GM12878 (cell line): ENCODE measurements at regions of chr1 and their contacts with region 1.

Region 1: DNA sequence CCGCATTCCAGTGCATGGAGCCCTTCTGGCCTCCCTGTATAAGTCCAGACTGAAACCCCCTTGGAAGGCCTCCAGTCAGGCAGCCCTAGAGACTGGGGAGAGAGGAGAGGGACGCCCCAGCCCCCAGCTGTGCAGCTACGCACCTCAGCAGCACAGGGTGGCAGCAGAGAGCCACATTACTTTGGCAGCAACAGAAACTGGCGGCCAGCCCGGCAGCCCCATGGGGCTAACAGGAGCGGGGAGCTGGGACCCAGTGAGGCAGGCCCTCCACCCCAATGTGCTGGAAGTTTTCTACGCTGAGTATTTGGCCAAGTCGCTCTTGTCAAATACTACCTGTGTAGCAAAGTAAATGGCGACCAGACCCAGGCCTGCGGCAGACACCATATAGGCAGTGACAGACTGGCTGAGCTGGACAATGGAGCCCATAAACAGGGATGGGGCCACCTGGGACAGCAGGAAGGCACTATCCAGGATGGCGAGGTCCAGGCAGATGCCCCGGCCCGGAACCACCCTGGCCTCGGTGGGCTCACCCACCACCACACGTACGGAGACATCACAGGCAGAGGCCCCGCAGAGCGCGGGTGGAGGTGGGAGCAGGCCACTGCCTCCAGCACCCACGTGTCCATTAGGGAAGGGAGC is 21.2 kb downstream of the SLC45A3 start:
- DNase-seq: no peak
- ATAC-seq: peak; percentile 95
- H3K4me3 ChIP-seq: no peak overlapping the region
- H3K27ac ChIP-seq: no peak overlapping the region
- H3K4me1 ChIP-seq: no peaks in the 10 kb centered on the region; the same call in 1 of the 2 replicates
- H3K27me3 ChIP-seq: no peaks in the 10 kb centered on the region
- CTCF ChIP-seq: peak; percentile 93 to 95 (median 94)
- EP300 ChIP-seq: no peak
- POLR2A ChIP-seq: no peak
- RAD21 ChIP-seq: peak; percentile 96

Region 2: DNA sequence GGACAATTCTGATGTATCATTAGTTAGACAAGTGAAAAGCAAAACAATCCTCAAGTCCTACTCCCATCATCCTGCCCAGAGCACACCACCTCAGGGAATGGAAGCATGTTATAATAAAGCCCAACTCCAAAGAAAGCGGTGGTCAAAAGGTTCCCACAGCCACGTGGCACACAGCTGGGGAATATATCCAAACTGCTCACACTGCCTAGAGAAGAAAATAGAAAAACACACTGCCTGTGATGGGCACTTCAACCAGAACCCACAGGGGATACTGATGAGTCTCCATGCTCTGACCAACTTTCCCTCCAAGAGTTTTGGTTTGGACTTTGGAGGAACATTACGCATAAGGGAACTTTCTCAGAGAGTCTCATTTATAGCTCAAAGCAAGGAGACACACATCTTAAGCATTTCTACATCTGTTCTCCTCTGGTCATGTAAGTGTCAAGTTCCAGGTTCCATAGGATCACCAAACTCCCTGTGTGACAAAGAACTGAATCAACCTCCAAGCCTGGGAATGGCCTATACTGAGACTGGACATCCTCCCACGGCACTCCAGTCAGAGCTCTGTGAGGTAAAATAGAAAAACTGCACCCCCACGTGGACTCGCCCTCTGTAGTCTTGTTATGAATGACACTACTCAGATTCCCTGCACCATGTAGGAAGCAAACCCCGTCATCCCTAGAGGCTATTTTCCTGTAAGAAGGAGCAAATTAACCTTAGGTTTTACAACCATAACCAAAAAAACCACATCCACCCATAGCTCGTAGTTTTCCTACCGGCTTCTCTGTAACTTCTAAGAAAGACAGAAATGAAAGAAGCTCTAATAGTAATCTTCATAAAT is 459.8 kb before region 1 on chr1:
- CTCF ChIA-PET with region 1: no interaction called
- POLR2A ChIA-PET with region 1: no interaction called
- RAD21 ChIA-PET with region 1: no interaction called
- SMC1A ChIA-PET with region 1: no interaction called
- in situ Hi-C with region 1: no loop called
- intact Hi-C with region 1: no loop called
- DNase-seq: no peak
- ATAC-seq: peak; percentile 67
- H3K4me3 ChIP-seq: no peak overlapping the region
- H3K27ac ChIP-seq: no peak overlapping the region
- H3K4me1 ChIP-seq: peaks cover 3% of the 10 kb centered on the region; the same call in 1 of the 2 replicates
- H3K27me3 ChIP-seq: no peaks in the 10 kb centered on the region
- CTCF ChIP-seq: peak in 1 of 3 experiments; percentile 13; a peak in 1 of 6 replicates
- EP300 ChIP-seq: no peak
- POLR2A ChIP-seq: no peak
- RAD21 ChIP-seq: peak; percentile 20; the same call in 1 of the 2 replicates

Region 3: DNA sequence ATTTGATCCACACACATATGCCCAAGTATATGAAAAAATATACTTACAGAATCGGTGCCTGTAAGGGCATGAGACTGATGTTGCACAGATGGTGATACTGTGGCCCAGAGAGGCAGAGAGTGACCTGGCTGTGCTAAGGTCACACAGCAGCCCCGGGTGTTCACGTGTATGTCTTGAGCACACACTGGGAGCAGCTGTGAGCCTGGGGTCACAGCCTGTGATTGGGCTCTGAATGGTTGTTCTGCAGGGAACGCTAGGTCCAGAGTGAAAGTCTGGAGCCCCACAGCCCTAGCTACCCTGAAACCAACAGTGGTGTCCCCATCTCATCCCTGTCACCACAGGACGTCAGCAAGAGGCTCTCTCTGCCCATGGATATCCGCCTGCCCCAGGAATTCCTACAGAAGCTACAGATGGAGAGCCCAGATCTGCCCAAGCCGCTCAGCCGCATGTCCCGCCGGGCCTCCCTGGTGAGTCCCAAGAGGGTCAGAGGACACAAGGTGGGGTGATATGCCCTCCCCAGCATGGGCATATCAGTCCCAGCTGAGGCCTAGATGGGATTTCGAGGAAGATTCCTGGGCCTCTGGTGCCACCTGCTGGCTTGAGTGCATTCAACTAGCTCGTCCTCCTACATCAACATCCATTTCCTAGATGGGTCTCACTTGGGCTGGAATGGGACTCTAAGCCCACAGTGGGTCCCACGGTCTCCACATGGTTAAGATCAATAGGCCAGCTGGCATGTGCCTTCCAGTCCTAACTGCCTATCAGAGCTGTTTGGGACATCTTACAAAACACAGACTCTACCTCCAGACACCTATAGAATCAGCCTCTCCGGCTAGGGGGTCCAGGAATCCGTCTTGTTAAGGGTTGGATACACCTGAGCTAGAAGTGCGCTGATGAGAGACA is 134.9 kb before region 1 on chr1:
- CTCF ChIA-PET with region 1: interaction called, 217 read pairs
- POLR2A ChIA-PET with region 1: interaction called, 3 read pairs
- RAD21 ChIA-PET with region 1: interaction called, 78 read pairs
- SMC1A ChIA-PET with region 1: interaction called, 61 read pairs
- in situ Hi-C with region 1: loop called (anchors 5 kb)
- intact Hi-C with region 1: loop called (anchors 1 kb)
- DNase-seq: no peak
- ATAC-seq: peak; percentile 80
- H3K4me3 ChIP-seq: no peak overlapping the region
- H3K27ac ChIP-seq: no peak overlapping the region
- H3K4me1 ChIP-seq: no peaks in the 10 kb centered on the region
- H3K27me3 ChIP-seq: peaks cover 0 to 1% of the 10 kb centered on the region in 2 experiments; a peak in 3 of 4 replicates
- CTCF ChIP-seq: peak; percentile 75 to 85 (median 77)
- EP300 ChIP-seq: no peak
- POLR2A ChIP-seq: no peak
- RAD21 ChIP-seq: peak; percentile 79

Region 4: DNA sequence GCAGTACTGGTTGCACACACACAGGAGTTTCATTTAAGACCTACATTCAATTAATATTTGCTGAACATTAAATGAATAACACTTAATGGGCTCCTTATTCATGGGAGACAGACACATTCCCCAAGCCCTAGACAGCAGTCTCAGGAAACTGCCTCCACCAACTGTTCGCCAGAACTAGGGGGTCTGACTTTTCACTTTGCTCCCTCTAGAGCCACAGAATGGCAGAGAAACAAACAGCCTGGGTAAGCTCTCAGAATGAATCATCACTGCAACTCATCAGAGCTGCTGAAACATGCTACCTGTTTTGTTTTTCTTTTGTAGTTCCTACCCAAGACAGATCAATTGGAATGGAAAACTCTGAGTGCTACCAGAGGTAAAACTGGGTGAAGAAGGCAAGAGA is 59.0 kb before region 1 on chr1:
- CTCF ChIA-PET with region 1: interaction called, 575 read pairs
- POLR2A ChIA-PET with region 1: interaction called, 3 read pairs
- RAD21 ChIA-PET with region 1: interaction called, 452 read pairs
- SMC1A ChIA-PET with region 1: interaction called, 415 read pairs
- in situ Hi-C with region 1: no loop called
- intact Hi-C with region 1: no loop called
- DNase-seq: no peak
- ATAC-seq: peak; percentile 88
- H3K4me3 ChIP-seq: peak overlapping the region; percentile 36; the same call in 1 of the 2 replicates
- H3K27ac ChIP-seq: peak overlapping the region; percentile 54
- H3K4me1 ChIP-seq: peaks cover 34% of the 10 kb centered on the region
- H3K27me3 ChIP-seq: no peaks in the 10 kb centered on the region
- CTCF ChIP-seq: peak; percentile 18 to 29 (median 21); a peak in 4 of 6 replicates
- EP300 ChIP-seq: no peak
- POLR2A ChIP-seq: no peak
- RAD21 ChIP-seq: no peak

Region 5: GRCh38 chr1:205700865-205701401 is 41.9 kb after region 1 on chr1:
- CTCF ChIA-PET with region 1: interaction called, 1,339 read pairs
- POLR2A ChIA-PET with region 1: interaction called, 5 read pairs
- RAD21 ChIA-PET with region 1: interaction called, 538 read pairs
- SMC1A ChIA-PET with region 1: interaction called, 1,008 read pairs
- in situ Hi-C with region 1: loop called (anchors 5 kb)
- intact Hi-C with region 1: no loop called
- DNase-seq: no peak
- ATAC-seq: no peak
- H3K4me3 ChIP-seq: no peak overlapping the region
- H3K27ac ChIP-seq: no peak overlapping the region
- H3K4me1 ChIP-seq: no peaks in the 10 kb centered on the region
- H3K27me3 ChIP-seq: no peaks in the 10 kb centered on the region
- CTCF ChIP-seq: no peak
- EP300 ChIP-seq: no peak
- POLR2A ChIP-seq: no peak
- RAD21 ChIP-seq: no peak

Region 6: DNA sequence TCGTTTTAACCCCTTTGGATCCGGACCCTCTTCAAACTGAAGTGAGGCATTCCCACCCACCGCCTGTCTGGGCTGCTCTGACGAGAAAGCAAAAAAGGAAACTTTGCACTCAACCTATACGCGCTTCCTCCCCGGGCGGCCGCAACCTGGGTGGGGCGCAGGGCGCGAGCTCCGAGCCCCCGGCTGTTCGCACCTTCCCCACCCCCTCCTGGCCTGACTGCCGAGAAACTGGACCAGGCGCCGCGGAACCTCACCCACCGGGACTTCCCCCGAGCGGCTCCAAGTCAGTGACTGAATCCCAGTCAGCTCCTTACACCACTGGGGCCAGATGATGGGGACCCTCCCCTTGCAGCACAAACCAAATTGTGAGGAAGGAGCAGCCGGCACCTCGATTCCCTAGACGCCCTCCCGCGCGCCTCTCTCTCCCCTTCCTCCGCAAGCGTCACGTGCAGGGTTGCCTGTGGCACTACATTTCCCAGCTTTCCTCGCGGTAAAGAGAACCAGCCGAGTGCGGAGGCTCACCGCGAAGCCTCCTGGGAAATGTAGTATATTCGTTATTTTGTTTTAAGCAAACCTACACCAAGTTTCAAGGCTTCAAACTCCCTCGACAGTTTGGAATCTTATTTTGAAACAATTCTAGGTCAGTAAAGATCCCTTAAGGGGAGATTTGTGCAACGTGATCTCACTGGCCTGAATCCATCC is 116.1 kb after region 1 on chr1 and contains the start of gene RAB29:
- CTCF ChIA-PET with region 1: interaction called, 59 read pairs
- POLR2A ChIA-PET with region 1: no interaction called
- RAD21 ChIA-PET with region 1: interaction called, 18 read pairs
- SMC1A ChIA-PET with region 1: interaction called, 28 read pairs
- in situ Hi-C with region 1: no loop called
- intact Hi-C with region 1: loop called (anchors 5 kb)
- DNase-seq: peak; percentile 57
- ATAC-seq: peak; percentile 83
- H3K4me3 ChIP-seq: peak within 1 kb of the TSS; percentile 88
- H3K27ac ChIP-seq: peak within 1 kb of the TSS; percentile 63
- H3K4me1 ChIP-seq: peaks cover 12% of the 10 kb centered on the region
- H3K27me3 ChIP-seq: no peaks in the 10 kb centered on the region
- CTCF ChIP-seq: no peak
- EP300 ChIP-seq: peak in 1 of 2 experiments; percentile 46; a peak in 1 of 4 replicates
- POLR2A ChIP-seq: peak; percentile 50; the same call in 1 of the 2 replicates
- RAD21 ChIP-seq: no peak
- polyA plus RNA-seq, gene RAB29: 12.6 to 16.2 TPM

Region 7: GRCh38 chr1:205919026-205919746 is 260.1 kb after region 1 on chr1:
- CTCF ChIA-PET with region 1: interaction called, 61 read pairs
- POLR2A ChIA-PET with region 1: no interaction called
- RAD21 ChIA-PET with region 1: interaction called, 21 read pairs
- SMC1A ChIA-PET with region 1: interaction called, 31 read pairs
- in situ Hi-C with region 1: no loop called
- intact Hi-C with region 1: loop called (anchors 5 kb)
- DNase-seq: peak; percentile 24
- ATAC-seq: peak; percentile 94
- H3K4me3 ChIP-seq: no peak overlapping the region
- H3K27ac ChIP-seq: no peak overlapping the region
- H3K4me1 ChIP-seq: no peaks in the 10 kb centered on the region; the same call in 1 of the 2 replicates
- H3K27me3 ChIP-seq: peaks cover 2 to 4% of the 10 kb centered on the region in 2 experiments; a peak in 2 of 4 replicates
- CTCF ChIP-seq: peak; percentile 90 to 93 (median 93)
- EP300 ChIP-seq: no peak
- POLR2A ChIP-seq: no peak
- RAD21 ChIP-seq: peak; percentile 91

Region 8: DNA sequence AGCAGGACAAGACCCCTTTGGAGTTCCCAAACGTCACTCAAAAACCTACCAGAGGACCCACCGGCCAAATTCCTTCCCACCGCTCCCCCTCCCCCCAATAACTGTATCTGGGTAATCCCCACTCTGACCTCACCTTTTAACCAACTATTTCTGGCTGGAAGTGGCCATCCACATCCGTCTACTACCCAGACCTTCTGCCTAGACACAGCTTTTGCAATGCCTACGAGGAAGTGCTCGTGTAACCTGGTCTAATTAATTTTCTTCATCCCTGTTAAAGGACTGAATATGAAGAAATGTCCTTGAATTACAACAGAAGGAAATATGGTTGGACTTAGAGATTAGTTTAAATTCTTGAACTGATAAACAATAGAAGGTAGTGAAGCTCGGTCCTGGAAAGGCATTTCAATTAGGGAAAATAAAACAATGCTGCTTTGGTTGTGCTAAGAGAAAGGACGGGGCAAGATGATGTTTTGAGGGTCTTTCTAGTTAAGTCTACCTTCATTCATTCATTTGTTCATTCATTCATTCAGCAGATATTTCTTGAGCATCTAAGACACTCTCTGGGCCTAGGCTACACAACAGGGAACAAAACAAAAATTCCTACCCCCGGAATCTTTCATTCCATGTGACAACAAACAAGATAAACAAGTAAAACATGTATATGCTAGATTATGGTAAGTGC is 439.3 kb after region 1 on chr1:
- CTCF ChIA-PET with region 1: no interaction called
- POLR2A ChIA-PET with region 1: no interaction called
- RAD21 ChIA-PET with region 1: no interaction called
- SMC1A ChIA-PET with region 1: no interaction called
- in situ Hi-C with region 1: no loop called
- intact Hi-C with region 1: no loop called
- DNase-seq: no peak
- ATAC-seq: no peak
- H3K4me3 ChIP-seq: no peak overlapping the region
- H3K27ac ChIP-seq: no peak overlapping the region
- H3K4me1 ChIP-seq: no peaks in the 10 kb centered on the region; the same call in 1 of the 2 replicates
- H3K27me3 ChIP-seq: no peaks in the 10 kb centered on the region; a peak in 1 of 4 replicates
- CTCF ChIP-seq: no peak
- EP300 ChIP-seq: no peak
- POLR2A ChIP-seq: no peak
- RAD21 ChIP-seq: no peak